AG04450 (cell line): ENCODE measurements at regions of chr13 and their contacts with region 1.

Region 1: GRCh38 chr13:74751739-74752138 is 617.5 kb upstream of the KLF12 start:
- DNase-seq: no peak
- H3K4me3 ChIP-seq: no peak overlapping the region
- H3K27ac ChIP-seq: no peak overlapping the region
- H3K27me3 ChIP-seq: no peaks in the 10 kb centered on the region
- CTCF ChIP-seq: no peak

Region 2: DNA sequence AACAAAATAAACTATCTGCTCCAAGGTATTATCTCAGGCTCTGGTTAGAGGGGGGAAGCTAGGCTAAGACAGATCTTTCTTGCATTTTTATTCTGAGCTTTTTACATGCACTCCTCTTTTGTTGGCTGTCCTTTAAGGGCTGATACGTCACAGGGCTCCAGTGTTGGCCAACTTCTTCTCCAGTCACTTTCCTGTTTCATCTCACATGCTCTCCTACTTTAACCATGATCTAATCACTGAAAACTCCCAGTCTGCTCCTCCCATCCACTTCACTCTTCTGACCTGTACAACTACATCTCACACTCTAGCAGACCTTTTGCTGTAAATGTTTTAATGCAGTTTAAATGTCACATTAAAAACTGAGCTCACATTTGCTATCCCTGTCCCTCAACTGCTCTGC is 107.5 kb before region 1 on chr13:
- CTCF ChIA-PET with region 1: no interaction called
- POLR2A ChIA-PET with region 1: no interaction called
- DNase-seq: no peak
- H3K4me3 ChIP-seq: no peak overlapping the region
- H3K27ac ChIP-seq: no peak overlapping the region
- H3K27me3 ChIP-seq: no peaks in the 10 kb centered on the region
- CTCF ChIP-seq: no peak

Region 3: GRCh38 chr13:74847966-74848365 is 96.2 kb after region 1 on chr13:
- CTCF ChIA-PET with region 1: no interaction called
- POLR2A ChIA-PET with region 1: interaction called, 11 read pairs
- DNase-seq: no peak
- H3K4me3 ChIP-seq: no peak overlapping the region
- H3K27ac ChIP-seq: no peak overlapping the region
- H3K27me3 ChIP-seq: no peaks in the 10 kb centered on the region
- CTCF ChIP-seq: no peak